ENCODE measurements at regions of chr2 and their contacts with region 1.

Region 1: GRCh38 chr2:168920504-168921157 is 19.5 kb downstream of the G6PC2 start:
- DNase-seq: peak; percentile 73
- ATAC-seq: peak; percentile 33; the same call in 1 of the 2 replicates
- H3K4me3 ChIP-seq: no peak overlapping the region
- H3K27ac ChIP-seq: no peak overlapping the region
- H3K4me1 ChIP-seq: no peaks in the 10 kb centered on the region
- H3K27me3 ChIP-seq: peaks cover 42% of the 10 kb centered on the region; the same call in 1 of the 2 replicates
- CTCF ChIP-seq: peak; percentile 76

Region 2: GRCh38 chr2:168773719-168774521 is 146.7 kb before region 1 on chr2:
- CTCF ChIA-PET with region 1: no interaction called
- POLR2A ChIA-PET with region 1: no interaction called
- intact Hi-C with region 1: loop called (anchors 1 kb)
- DNase-seq: peak; percentile 83
- ATAC-seq: peak; percentile 80
- H3K4me3 ChIP-seq: no peak overlapping the region
- H3K27ac ChIP-seq: no peak overlapping the region
- H3K4me1 ChIP-seq: no peaks in the 10 kb centered on the region
- H3K27me3 ChIP-seq: no peaks in the 10 kb centered on the region
- CTCF ChIP-seq: peak; percentile 98